ENCODE measurements at regions of chr7 and their contacts with region 1.

Region 1: GRCh38 chr7:128862571-128863432 is at the start of gene ATP6V1F:
- H3K4me3 ChIP-seq: peak within 1 kb of the TSS; percentile 68
- H3K27ac ChIP-seq: peak within 1 kb of the TSS; percentile 69; the same call in 1 of the 2 replicates
- H3K4me1 ChIP-seq: no peaks in the 10 kb centered on the region; the same call in none of the 2 replicates
- CTCF ChIP-seq: no peak; the same call in 1 of the 2 replicates

Region 2: DNA sequence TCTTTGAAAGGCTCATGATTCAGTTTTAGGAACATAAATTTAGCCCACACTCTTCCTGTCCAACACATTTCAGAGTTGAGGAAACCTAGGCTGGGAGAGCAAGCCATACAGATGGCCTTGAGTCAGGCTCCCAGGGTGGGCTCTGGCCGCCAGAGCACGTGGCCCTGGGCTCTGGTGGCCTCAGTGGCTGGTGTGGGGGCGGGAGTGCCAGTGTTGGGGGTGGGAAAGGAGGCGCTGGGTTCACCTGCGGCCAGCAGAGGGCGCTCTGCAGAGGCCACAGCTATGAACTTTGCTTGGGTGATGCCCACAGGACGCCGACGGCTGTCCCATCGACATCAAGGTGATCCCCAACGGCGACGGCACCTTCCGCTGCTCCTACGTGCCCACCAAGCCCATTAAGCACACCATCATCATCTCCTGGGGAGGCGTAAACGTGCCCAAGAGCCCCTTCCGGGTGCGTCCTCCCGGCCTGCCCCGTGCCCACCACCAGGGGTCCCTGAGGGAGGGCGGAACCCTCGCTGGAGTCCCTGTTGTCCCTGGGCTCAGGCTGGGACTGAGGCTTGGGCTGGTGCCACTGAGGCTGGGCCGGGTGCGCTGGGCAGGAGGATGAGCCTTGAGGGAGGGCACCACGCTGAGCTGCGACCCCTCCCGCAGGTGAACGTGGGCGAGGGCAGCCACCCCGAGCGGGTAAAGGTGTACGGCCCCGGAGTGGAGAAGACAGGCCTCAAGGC is 20.7 kb before region 1 on chr7:
- CTCF ChIA-PET with region 1: interaction called, 17 read pairs
- POLR2A ChIA-PET with region 1: interaction called, 3 read pairs
- H3K4me3 ChIP-seq: no peak overlapping the region
- H3K27ac ChIP-seq: no peak overlapping the region
- H3K4me1 ChIP-seq: no peaks in the 10 kb centered on the region
- CTCF ChIP-seq: peak; percentile 72; the same call in 1 of the 2 replicates

Region 3: DNA sequence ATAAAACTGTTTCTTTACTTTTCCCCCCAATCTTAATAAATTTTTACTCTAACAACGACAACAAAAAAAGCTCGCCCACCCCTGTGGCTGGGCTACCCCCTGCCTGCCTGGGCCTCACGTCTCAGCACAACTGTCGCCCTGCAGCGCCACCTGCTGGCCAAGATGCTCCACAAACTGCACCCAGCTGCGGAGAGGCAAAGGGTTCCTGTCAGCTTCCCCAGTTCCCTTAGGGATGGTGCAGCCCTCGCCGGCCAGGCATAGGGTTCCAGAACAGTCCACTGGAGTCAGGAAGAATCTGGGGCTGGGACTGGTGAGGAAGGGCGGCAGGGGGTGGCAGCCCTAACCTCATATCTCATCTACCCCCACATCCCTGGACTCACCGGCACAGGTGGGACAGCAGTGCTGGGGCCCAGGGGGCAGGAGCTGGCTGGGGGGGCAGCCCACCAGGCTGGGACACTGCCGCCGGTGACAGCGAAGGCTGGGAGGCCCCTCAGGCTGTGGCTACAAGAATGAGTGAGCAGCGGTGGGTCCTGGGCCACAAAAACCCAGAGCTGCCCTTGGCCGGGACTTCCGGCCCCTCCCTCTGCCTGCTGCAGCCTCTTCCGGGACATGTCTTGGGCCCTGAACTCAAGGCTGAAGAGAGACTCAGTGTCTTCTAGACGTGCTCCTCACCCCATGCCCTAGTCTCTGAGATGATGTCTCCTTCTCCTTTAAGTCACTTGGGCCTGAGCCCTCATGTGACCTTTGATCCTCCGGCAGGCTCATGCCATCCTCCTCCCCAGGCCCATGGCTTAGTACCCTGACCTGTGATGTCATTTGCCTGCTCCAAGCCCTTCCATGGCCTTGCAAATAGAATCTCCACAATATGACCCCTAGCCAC is 21.1 kb after region 1 on chr7:
- CTCF ChIA-PET with region 1: interaction called, 56 read pairs
- POLR2A ChIA-PET with region 1: interaction called, 6 read pairs
- H3K4me3 ChIP-seq: no peak overlapping the region
- H3K27ac ChIP-seq: no peak overlapping the region
- H3K4me1 ChIP-seq: no peaks in the 10 kb centered on the region
- CTCF ChIP-seq: peak; percentile 76

Region 4: DNA sequence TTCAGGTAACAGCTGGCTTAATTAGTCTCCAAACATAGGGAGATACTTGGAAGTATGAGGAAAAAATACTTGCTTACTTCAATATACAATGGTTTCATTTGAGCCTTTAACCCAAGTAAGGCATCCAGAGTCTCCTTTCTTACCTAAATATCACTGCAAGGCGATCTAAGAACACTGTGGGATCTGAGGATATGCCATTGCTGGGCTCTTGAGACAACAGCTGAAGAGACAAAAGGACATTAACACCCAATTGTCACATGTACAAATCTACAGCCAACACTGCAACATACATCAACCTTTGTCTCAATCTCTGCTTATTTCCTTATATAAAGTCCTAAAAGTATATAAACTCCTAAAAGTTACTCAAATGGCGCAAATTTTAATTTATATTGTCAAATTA is 119.3 kb after region 1 on chr7:
- CTCF ChIA-PET with region 1: no interaction called
- POLR2A ChIA-PET with region 1: no interaction called
- H3K4me3 ChIP-seq: no peak overlapping the region
- H3K27ac ChIP-seq: no peak overlapping the region
- H3K4me1 ChIP-seq: no peaks in the 10 kb centered on the region
- CTCF ChIP-seq: no peak

Region 5: GRCh38 chr7:129072479-129073011 is 209.7 kb after region 1 on chr7:
- CTCF ChIA-PET with region 1: no interaction called
- POLR2A ChIA-PET with region 1: no interaction called
- H3K4me3 ChIP-seq: no peak overlapping the region
- H3K27ac ChIP-seq: no peak overlapping the region
- H3K4me1 ChIP-seq: no peaks in the 10 kb centered on the region
- CTCF ChIP-seq: no peak

Region 6: DNA sequence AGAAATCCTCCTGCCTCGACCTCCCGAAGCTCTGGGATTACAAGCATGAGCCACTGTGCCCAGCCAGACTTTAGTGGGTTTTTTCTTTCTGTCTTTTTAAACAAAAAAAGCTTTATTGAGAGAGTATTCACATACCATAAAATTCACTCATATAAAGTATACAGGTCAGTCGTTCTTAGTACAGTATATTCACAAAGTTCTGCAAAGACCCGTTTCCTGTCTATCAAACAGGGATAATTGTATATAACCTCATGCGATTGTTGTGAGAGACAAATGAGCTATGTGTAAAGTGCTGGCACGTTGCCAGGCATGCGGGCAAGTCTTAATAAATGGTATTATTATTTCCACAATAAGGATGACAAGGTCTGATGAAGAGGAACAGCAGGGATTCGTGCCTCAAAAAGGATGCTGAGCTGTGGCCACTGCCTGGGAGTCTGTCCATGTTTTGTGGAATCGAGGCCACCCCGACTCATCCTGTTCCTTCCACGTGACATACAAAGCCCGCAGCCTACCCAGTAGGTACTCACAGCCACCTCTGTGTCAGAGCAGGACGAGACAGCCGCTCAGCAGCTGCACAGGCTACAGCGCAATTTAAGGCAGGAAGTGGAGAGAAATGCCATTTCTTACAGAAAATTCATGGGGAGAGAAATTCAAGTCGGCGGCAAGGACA is 691.2 kb after region 1 on chr7:
- CTCF ChIA-PET with region 1: no interaction called
- POLR2A ChIA-PET with region 1: no interaction called
- H3K4me3 ChIP-seq: no peak overlapping the region
- H3K27ac ChIP-seq: no peak overlapping the region
- H3K4me1 ChIP-seq: peaks cover 4% of the 10 kb centered on the region
- CTCF ChIP-seq: no peak